Activated CD8-positive, alpha-beta T cell treated with anti-CD3 and anti-CD28 coated beads, Interleukin-2, amount 10 ng/mL, durations not matched to agents 7 days and 5 days (primary cell): ENCODE measurements at regions of chrX and their contacts with region 1.

Region 1: GRCh38 chrX:45843518-45843917 is 642.8 kb upstream of the DIPK2B start:
- DNase-seq: peak; percentile 33
- ATAC-seq: no peak
- H3K4me3 Mint-ChIP-seq: no peak overlapping the region
- H3K27ac Mint-ChIP-seq: no peak overlapping the region
- H3K4me1 Mint-ChIP-seq: peaks cover 44% of the 10 kb centered on the region
- H3K27me3 Mint-ChIP-seq: no peaks in the 10 kb centered on the region

Region 2: DNA sequence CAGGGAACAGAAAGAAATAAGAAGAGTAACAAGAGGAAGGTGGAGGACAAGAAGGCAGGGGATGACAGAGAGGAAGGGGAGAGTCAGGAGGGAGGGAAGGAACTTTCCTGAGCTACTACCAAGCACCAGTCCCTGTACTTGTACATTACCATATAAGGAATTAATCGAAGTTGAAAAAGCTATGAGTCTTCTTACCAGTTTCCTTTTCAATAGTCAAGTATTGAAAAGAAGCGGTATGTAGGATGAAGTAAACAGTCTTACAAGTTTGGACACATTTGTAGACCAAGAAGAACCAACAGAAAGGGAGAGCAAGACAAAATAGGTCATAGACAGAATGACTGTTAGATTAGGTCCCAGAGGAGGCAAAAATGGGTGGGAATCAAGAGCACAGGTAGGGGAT is 13.2 kb before region 1 on chrX:
- CTCF ChIA-PET with region 1: interaction called, 21 read pairs
- POLR2A ChIA-PET with region 1: no interaction called
- DNase-seq: no peak
- ATAC-seq: no peak
- H3K4me3 Mint-ChIP-seq: no peak overlapping the region
- H3K27ac Mint-ChIP-seq: peak overlapping the region; percentile 65
- H3K4me1 Mint-ChIP-seq: peaks cover 19% of the 10 kb centered on the region
- H3K27me3 Mint-ChIP-seq: no peaks in the 10 kb centered on the region

Region 3: GRCh38 chrX:45879512-45879911 is 36.0 kb after region 1 on chrX:
- CTCF ChIA-PET with region 1: no interaction called
- POLR2A ChIA-PET with region 1: no interaction called
- DNase-seq: no peak
- ATAC-seq: no peak
- H3K4me3 Mint-ChIP-seq: no peak overlapping the region
- H3K27ac Mint-ChIP-seq: no peak overlapping the region
- H3K4me1 Mint-ChIP-seq: no peaks in the 10 kb centered on the region
- H3K27me3 Mint-ChIP-seq: no peaks in the 10 kb centered on the region

Region 4: DNA sequence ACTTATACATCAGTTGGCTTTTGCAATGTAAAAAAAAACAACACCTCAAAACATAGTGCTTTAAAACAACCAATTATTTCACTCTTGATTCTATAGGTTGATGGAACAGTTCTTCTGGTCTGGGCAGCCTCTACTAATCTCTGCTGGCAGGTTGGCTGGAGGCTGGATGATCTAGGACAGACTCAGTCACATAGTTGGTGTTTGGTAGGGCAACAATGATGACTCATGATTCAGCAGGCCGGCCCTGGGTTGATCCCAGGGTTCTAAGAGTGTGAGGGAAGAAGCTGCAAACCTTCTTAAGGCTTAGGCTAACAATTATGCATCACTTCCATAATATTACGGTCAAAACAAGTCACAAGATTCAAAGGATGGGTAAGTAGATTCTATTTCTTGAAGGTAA is 143.5 kb after region 1 on chrX:
- CTCF ChIA-PET with region 1: no interaction called
- POLR2A ChIA-PET with region 1: no interaction called
- DNase-seq: no peak
- ATAC-seq: no peak
- H3K4me3 Mint-ChIP-seq: no peak overlapping the region
- H3K27ac Mint-ChIP-seq: no peak overlapping the region
- H3K4me1 Mint-ChIP-seq: no peaks in the 10 kb centered on the region
- H3K27me3 Mint-ChIP-seq: no peaks in the 10 kb centered on the region